ENCODE measurements at regions of chr2 and their contacts with region 1.

Region 1: GRCh38 chr2:237315170-237315828 is 98.7 kb downstream of the COL6A3 start:
- DNase-seq: no peak
- H3K4me3 ChIP-seq: no peak overlapping the region
- H3K27ac ChIP-seq: no peak overlapping the region
- H3K4me1 ChIP-seq: no peaks in the 10 kb centered on the region
- H3K27me3 ChIP-seq: 0 out of 2 replicates have a peak, but pooled peaks cover 4% of the 10 kb centered on the region
- CTCF ChIP-seq: no peak

Region 2: DNA sequence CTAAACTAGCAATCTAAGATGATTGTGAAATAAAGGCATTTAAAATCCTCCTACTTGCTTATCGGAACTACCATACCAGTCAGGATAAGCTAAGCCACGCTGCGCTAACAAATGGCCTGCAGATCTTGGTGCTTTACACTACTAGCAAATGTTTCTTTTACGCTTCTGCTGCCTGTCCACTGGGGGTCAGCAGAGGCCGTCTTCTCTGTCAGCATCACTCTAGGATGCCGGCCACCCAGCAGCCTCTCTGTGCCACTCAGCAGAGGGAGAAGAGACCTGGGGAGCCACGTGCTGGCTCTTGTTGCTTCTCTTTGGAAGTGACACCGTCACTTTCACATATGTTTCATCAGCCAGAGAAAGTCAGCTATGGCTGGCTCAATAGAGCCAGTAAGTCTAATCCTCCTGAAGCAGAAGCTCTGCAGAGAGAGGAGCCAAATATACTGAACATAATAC is 193.1 kb before region 1 on chr2:
- CTCF ChIA-PET with region 1: no interaction called
- POLR2A ChIA-PET with region 1: no interaction called
- intact Hi-C with region 1: no loop called
- DNase-seq: peak; percentile 55 to 67
- H3K4me3 ChIP-seq: no peak overlapping the region
- H3K27ac ChIP-seq: peak overlapping the region; percentile 44
- H3K4me1 ChIP-seq: peaks cover 19% of the 10 kb centered on the region; the same call in 1 of the 2 replicates
- H3K27me3 ChIP-seq: no peaks in the 10 kb centered on the region
- CTCF ChIP-seq: peak; percentile 79

Region 3: GRCh38 chr2:237165405-237166276 is 149.7 kb before region 1 on chr2:
- CTCF ChIA-PET with region 1: interaction called, 12 read pairs
- POLR2A ChIA-PET with region 1: no interaction called
- intact Hi-C with region 1: no loop called
- DNase-seq: no peak
- H3K4me3 ChIP-seq: no peak overlapping the region
- H3K27ac ChIP-seq: no peak overlapping the region
- H3K4me1 ChIP-seq: no peaks in the 10 kb centered on the region
- H3K27me3 ChIP-seq: no peaks in the 10 kb centered on the region
- CTCF ChIP-seq: peak; percentile 82

Region 4: DNA sequence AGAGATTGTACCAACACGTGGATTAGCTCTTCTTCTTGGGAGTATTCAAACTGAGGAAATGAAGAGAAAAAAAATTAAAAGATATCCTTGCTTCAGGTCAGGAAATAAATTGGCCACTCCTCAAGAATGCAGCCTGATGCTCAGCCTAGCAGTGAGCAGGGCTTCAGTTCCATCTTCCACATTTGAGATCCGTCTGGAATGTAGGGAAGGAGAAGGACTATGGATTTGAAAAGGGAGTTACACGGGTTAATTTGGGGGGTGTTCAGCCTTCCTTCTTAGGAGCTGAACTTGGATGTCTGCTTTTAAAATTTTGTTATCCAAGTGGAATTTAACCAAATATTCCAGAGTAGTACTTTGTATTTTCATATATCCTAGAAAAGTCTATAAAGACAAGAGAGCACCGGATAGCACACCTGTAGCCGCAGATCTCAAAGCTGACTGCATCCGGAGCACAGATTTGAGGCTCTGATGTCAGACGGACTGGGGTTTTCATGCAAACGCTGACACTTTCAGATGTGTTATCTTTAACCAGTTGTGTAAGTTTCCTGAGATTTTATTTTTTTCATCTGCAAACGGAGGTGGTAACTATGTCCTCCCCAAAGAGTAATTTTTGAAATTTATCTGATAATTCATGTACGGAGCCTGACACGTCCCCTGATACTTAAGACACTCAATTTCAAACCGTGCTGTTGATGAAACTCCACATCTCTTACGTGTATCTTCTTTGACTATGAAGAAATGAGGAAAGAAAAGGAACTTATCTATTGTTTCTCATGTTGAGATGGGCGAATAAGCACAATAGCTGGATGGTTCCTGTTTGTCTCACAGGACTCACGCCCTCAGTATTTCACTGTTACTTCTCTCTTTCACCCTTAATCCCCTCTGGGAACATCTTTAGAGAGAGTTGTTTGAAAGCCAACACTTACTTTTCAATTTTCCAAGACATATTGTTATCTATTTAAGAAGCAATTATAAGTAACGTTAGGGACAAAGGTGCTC is 130.1 kb before region 1 on chr2:
- CTCF ChIA-PET with region 1: no interaction called
- POLR2A ChIA-PET with region 1: interaction called, 11 read pairs
- intact Hi-C with region 1: no loop called
- DNase-seq: no peak
- H3K4me3 ChIP-seq: no peak overlapping the region
- H3K27ac ChIP-seq: no peak overlapping the region
- H3K4me1 ChIP-seq: peaks cover 17% of the 10 kb centered on the region
- H3K27me3 ChIP-seq: no peaks in the 10 kb centered on the region
- CTCF ChIP-seq: no peak

Region 5: DNA sequence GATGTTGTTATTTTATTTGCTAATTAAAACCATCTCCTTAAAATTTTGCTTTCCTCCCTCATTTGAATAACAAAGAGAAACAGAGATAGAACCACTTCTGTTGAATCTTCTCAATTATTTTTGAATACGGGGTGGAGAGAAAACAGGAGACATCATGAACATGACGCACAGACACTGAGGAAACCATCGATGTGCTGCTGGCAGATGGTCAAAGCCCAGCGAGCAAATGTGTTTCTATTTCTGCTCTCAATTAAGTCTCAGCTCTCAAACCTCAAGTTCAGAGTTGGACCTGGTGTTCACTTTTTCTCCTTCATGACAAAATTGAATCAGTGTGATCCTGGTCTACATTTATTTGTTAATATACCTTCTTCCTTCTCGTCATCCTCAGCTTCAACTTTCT is 1496.5 kb after region 1 on chr2:
- CTCF ChIA-PET with region 1: no interaction called
- POLR2A ChIA-PET with region 1: no interaction called
- intact Hi-C with region 1: no loop called
- DNase-seq: no peak
- H3K4me3 ChIP-seq: no peak overlapping the region
- H3K27ac ChIP-seq: no peak overlapping the region
- H3K4me1 ChIP-seq: no peaks in the 10 kb centered on the region
- H3K27me3 ChIP-seq: peaks cover 91% of the 10 kb centered on the region
- CTCF ChIP-seq: no peak

Measured in PC-9 (cell line).